Caco-2 (cell line): ENCODE measurements at regions of chr10 and their contacts with region 1.

Region 1: DNA sequence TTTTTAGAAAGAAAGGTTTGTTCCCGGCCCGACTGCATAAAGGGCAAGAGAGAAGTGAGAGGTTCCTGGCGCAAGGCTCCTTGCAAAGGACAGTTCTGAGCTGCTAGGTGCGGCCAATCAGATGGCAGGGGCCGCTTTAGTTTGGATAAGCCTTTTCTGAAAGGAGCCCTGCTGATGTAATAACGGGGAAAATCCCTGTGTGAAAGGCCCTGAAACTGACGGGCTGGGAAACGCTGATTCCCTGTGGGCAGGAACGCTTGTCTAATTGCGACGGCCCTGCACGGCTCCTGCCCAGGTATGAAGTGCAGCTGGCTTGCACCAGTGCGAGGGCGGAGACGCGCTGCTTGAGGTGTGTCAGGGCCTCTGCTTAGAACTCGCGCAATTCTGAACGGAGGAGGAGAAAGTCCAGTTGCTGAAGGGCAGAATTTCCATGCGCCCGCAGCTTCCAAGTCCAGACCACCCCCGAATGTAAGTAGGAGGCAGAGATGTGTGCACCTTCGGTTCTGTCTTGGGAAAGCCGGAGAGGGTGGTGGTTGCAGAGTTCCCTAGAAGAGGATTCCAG is 30.5 kb downstream of the TACC2 start:
- DNase-seq: peak; percentile 85 to 90
- H3K4me3 ChIP-seq: peak overlapping the region; percentile 41
- H3K4me3 Mint-ChIP-seq: peak overlapping the region; percentile 96
- H3K27ac Mint-ChIP-seq: peak overlapping the region; percentile 94
- H3K4me1 ChIP-seq: peaks cover 27% of the 10 kb centered on the region
- H3K4me1 Mint-ChIP-seq: peaks cover 10% of the 10 kb centered on the region
- H3K27me3 ChIP-seq: no peaks in the 10 kb centered on the region
- H3K27me3 Mint-ChIP-seq: no peaks in the 10 kb centered on the region
- CTCF ChIP-seq: no peak

Region 2: GRCh38 chr10:121974535-121975294 is 44.8 kb before region 1 on chr10 and contains the start of gene NSMCE4A:
- CTCF ChIA-PET with region 1: no interaction called
- POLR2A ChIA-PET with region 1: no interaction called
- intact Hi-C with region 1: loop called (anchors 2 kb)
- DNase-seq: peak; percentile 79 to 89
- H3K4me3 ChIP-seq: peak within 1 kb of the TSS; percentile 95
- H3K4me3 Mint-ChIP-seq: peak within 1 kb of the TSS; percentile 72
- H3K27ac Mint-ChIP-seq: peak within 1 kb of the TSS; percentile 48
- H3K4me1 ChIP-seq: peaks cover 6% of the 10 kb centered on the region
- H3K4me1 Mint-ChIP-seq: peaks cover 9% of the 10 kb centered on the region
- H3K27me3 ChIP-seq: no peaks in the 10 kb centered on the region
- H3K27me3 Mint-ChIP-seq: no peaks in the 10 kb centered on the region
- CTCF ChIP-seq: peak; percentile 60 to 66
- total RNA-seq, gene NSMCE4A: 106 and 111 TPM in 2 replicates

Region 3: GRCh38 chr10:121994390-121994961 is 25.0 kb before region 1 on chr10:
- CTCF ChIA-PET with region 1: no interaction called
- POLR2A ChIA-PET with region 1: interaction called, 3 read pairs
- intact Hi-C with region 1: loop called (anchors 1 kb)
- DNase-seq: peak; percentile 64 to 73
- H3K4me3 ChIP-seq: peak overlapping the region; percentile 20
- H3K4me3 Mint-ChIP-seq: peak overlapping the region; percentile 80
- H3K27ac Mint-ChIP-seq: peak overlapping the region; percentile 89
- H3K4me1 ChIP-seq: peaks cover 24% of the 10 kb centered on the region
- H3K4me1 Mint-ChIP-seq: peaks cover 26% of the 10 kb centered on the region
- H3K27me3 ChIP-seq: no peaks in the 10 kb centered on the region
- H3K27me3 Mint-ChIP-seq: no peaks in the 10 kb centered on the region
- CTCF ChIP-seq: no peak

Region 4: DNA sequence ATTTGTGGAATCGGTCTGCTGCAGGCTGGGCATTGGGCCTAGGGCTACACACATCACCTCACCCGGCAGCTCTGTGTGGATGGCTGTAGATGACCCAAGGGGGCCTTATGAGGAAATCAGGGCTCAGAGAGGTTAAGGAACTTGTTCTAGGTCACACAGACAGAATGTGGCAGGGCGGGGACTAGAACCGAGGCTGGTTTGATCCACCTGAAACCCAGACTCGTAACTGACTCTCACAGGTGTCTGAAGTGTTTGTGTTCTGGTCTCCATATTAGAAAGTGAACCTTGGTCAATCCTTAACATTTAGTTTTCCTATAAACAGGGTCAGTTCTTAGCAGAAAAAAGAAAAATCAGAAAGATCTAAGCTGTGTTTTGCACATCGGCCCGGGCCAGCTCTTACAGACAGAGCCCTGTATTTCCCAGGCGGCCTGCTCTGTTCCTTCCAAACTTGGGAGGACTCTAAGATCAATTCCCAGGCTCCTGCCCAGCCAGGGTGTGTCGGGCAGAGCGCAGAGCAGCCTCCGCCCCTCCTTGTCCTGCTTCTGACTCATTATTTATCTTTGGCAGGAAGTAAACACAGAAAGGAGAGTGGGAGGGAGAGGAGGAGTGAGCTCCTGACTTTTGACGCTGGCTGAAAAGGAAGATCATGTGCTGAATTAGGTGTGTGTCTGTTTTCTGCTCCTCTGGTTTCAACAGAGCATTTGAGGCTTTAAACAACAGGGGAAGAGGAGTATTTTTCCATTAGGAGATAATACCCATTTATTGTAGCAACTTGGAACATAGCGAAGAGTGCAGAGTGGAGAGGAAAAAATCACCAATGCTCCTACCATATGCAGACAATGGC is 43.6 kb after region 1 on chr10:
- CTCF ChIA-PET with region 1: interaction called, 3 read pairs
- POLR2A ChIA-PET with region 1: no interaction called
- intact Hi-C with region 1: loop called (anchors 5 kb)
- DNase-seq: peak; percentile 85
- H3K4me3 ChIP-seq: no peak overlapping the region
- H3K4me3 Mint-ChIP-seq: peak overlapping the region; percentile 72
- H3K27ac Mint-ChIP-seq: peak overlapping the region; percentile 87
- H3K4me1 ChIP-seq: peaks cover 10% of the 10 kb centered on the region
- H3K4me1 Mint-ChIP-seq: peaks cover 22% of the 10 kb centered on the region
- H3K27me3 ChIP-seq: no peaks in the 10 kb centered on the region
- H3K27me3 Mint-ChIP-seq: no peaks in the 10 kb centered on the region
- CTCF ChIP-seq: no peak

Region 5: GRCh38 chr10:122089311-122090017 is 70.0 kb after region 1 on chr10:
- CTCF ChIA-PET with region 1: no interaction called
- POLR2A ChIA-PET with region 1: no interaction called
- intact Hi-C with region 1: no loop called
- DNase-seq: no peak
- H3K4me3 ChIP-seq: no peak overlapping the region
- H3K4me3 Mint-ChIP-seq: no peak overlapping the region
- H3K27ac Mint-ChIP-seq: no peak overlapping the region
- H3K4me1 ChIP-seq: no peaks in the 10 kb centered on the region
- H3K4me1 Mint-ChIP-seq: no peaks in the 10 kb centered on the region
- H3K27me3 ChIP-seq: no peaks in the 10 kb centered on the region
- H3K27me3 Mint-ChIP-seq: no peaks in the 10 kb centered on the region
- CTCF ChIP-seq: no peak